IMR-90 (cell line): ENCODE measurements at regions of chr2 and their contacts with region 1.

Region 1: DNA sequence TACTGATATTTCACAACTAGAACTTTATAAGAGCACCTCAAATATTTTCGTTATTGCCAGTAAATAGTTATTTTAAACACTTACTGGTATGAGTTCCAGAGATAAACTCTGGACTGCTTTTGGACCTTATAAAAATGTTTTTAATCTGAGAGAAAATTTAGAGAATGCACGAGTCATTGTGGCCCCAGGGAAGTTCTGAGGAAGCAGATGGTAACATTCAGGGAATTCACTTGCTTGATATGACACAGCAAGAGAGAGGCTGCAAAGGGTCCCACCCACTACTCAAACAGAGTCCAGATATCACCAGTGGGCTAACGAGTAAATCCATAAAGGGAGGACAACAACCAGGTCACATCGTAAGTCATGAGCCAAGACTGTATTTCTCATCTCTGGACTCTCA is 526.8 kb downstream of the TDRD15 start:
- DNase-seq: peak; percentile 60
- ATAC-seq: peak; percentile 67
- H3K4me3 ChIP-seq: no peak overlapping the region
- H3K27ac ChIP-seq: peak overlapping the region; percentile 97
- H3K4me1 ChIP-seq: peaks cover 19% of the 10 kb centered on the region
- H3K27me3 ChIP-seq: no peaks in the 10 kb centered on the region
- CTCF ChIP-seq: no peak
- POLR2A ChIP-seq: no peak
- RAD21 ChIP-seq: no peak

Region 2: GRCh38 chr2:21836766-21837543 is 186.4 kb after region 1 on chr2:
- CTCF ChIA-PET with region 1: no interaction called
- POLR2A ChIA-PET with region 1: no interaction called
- dilution Hi-C with region 1: no loop called
- in situ Hi-C with region 1: no loop called
- intact Hi-C with region 1: loop called (anchors 10 kb)
- DNase-seq: peak; percentile 95
- ATAC-seq: peak; percentile 88
- H3K4me3 ChIP-seq: no peak overlapping the region
- H3K27ac ChIP-seq: peak overlapping the region; percentile 39; the same call in 1 of the 2 replicates
- H3K4me1 ChIP-seq: peaks cover 5% of the 10 kb centered on the region
- H3K27me3 ChIP-seq: no peaks in the 10 kb centered on the region
- CTCF ChIP-seq: no peak
- POLR2A ChIP-seq: no peak
- RAD21 ChIP-seq: no peak